Adrenal gland (tissue), 19 donors: ENCODE measurements at regions of chr9 and their contacts with region 1.

Region 1: DNA sequence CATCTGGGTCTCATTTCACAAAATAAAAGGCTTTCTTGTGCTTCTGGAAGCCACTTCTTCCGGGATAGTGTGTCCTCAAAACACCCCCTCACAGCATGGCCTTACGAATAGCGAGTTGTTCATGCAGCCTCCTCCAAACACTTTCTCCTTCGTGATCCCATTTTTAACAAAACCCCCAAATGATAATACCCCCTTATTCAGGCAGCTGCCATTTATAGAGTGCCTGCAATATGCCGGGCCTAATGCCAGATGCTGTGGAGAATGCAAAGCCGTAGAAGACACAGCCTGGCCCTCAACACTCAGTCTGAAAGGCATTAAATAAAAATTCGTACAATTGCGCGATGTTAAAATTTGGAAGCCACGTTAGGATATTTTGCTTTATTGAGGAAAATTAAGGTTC is 66.4 kb upstream of the SLC44A1 start:
- DNase-seq: no peak
- H3K4me3 ChIP-seq: no peak overlapping the region
- H3K27ac ChIP-seq: no peak overlapping the region
- H3K4me1 ChIP-seq: peaks cover 0 to 6% of the 10 kb centered on the region in 2 donors
- H3K27me3 ChIP-seq: no peaks in the 10 kb centered on the region
- CTCF ChIP-seq: no peak
- POLR2A ChIP-seq: no peak

Region 2: GRCh38 chr9:104774831-104775573 is 403.1 kb before region 1 on chr9:
- intact Hi-C with region 1: no loop called
- DNase-seq: peak in 4 of 7 donors; percentile 55 to 72 (median 62)
- H3K4me3 ChIP-seq: no peak overlapping the region
- H3K27ac ChIP-seq: peak overlapping the region; percentile 49 to 82 (median 55)
- H3K4me1 ChIP-seq: peaks cover 21 to 75% of the 10 kb centered on the region in 2 donors
- H3K27me3 ChIP-seq: no peaks in the 10 kb centered on the region
- CTCF ChIP-seq: no peak
- POLR2A ChIP-seq: peak in 1 of 2 donors; percentile 14

Region 3: GRCh38 chr9:105339849-105340248 is 161.8 kb after region 1 on chr9:
- intact Hi-C with region 1: loop called in 1 of 2 experiments (anchors 5 kb)
- DNase-seq: no peak
- H3K4me3 ChIP-seq: no peak overlapping the region
- H3K27ac ChIP-seq: no peak overlapping the region
- H3K4me1 ChIP-seq: peaks cover 0 to 13% of the 10 kb centered on the region in 2 donors
- H3K27me3 ChIP-seq: no peaks in the 10 kb centered on the region
- CTCF ChIP-seq: no peak
- POLR2A ChIP-seq: no peak